ENCODE measurements at regions of chr6 and their contacts with region 1.

Region 1: GRCh38 chr6:32244946-32245398 is 21.1 kb upstream of the NOTCH4 start:
- DNase-seq: peak; percentile 85 to 89
- ATAC-seq: peak; percentile 73 to 93 (median 86)
- H3K4me3 ChIP-seq: peak overlapping the region; percentile 27
- H3K27ac ChIP-seq: peak overlapping the region; percentile 51
- H3K4me1 ChIP-seq: peaks cover 4% of the 10 kb centered on the region
- H3K27me3 ChIP-seq: no peaks in the 10 kb centered on the region
- CTCF ChIP-seq: peak; percentile 92

Region 2: GRCh38 chr6:32796848-32797776 is 552.1 kb after region 1 on chr6:
- intact Hi-C with region 1: loop called (anchors 5 kb)
- DNase-seq: peak; percentile 69 to 81
- ATAC-seq: peak; percentile 68 to 89 (median 70)
- H3K4me3 ChIP-seq: peak overlapping the region; percentile 41
- H3K27ac ChIP-seq: no peak overlapping the region
- H3K4me1 ChIP-seq: no peaks in the 10 kb centered on the region
- H3K27me3 ChIP-seq: peaks cover 0 to 59% (median 2%) of the 10 kb centered on the region in 3 donors
- CTCF ChIP-seq: peak; percentile 91

Measured in psoas muscle (tissue), 8 donors.